Psoas muscle (tissue), 8 donors: ENCODE measurements at regions of chr13 and their contacts with region 1.

Region 1: DNA sequence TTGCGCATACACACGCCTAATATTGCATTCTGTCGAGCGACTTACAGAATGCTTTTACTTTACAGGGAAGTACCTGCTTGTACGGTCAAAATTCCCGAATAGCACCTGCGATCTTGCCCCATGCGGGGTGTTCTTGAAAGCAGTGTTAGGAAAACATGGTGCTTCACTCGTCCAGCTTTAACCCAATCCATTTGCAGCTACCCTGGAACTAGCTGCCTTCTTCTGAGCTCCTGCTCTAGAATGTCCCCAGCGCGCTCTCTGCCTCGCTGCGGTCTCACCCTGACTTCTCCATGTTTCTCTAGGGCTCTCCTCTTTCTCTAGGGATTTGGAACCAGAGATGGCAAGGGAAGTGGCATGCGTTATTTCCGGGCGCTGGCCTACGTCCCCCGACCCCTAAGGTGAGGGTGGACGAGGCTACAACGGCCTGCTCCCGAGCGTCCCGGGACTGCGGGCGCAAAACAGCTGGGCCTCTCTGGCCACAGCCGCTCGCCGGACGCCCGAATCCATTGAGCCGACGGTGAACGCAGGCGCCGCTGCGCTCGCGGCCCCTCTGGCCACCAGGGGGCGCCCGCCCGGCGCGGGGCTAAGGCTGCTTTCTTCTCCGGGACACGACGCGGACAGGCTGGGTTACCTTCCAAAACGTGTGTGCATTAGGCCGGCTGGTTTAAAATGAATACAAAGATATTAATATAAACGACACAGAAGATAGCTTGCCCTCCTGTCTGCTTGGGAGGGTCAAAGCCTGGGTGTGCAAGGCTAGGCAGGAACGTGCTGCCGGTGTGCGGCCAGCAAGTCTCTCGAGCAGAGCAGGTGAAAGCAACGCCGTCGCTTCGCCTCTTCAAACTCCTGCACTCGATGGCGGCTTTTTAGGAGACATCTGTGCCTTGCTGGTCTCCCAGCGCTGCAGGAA is 1.8 kb upstream of the SPRY2 start:
- DNase-seq: peak; percentile 89 to 92
- ATAC-seq: peak; percentile 54 to 68 (median 60)
- H3K4me3 ChIP-seq: peak overlapping the region; percentile 98
- H3K27ac ChIP-seq: peak overlapping the region; percentile 99
- H3K4me1 ChIP-seq: peaks cover 13% of the 10 kb centered on the region
- H3K27me3 ChIP-seq: no peaks in the 10 kb centered on the region
- CTCF ChIP-seq: peak; percentile 100

Region 2: DNA sequence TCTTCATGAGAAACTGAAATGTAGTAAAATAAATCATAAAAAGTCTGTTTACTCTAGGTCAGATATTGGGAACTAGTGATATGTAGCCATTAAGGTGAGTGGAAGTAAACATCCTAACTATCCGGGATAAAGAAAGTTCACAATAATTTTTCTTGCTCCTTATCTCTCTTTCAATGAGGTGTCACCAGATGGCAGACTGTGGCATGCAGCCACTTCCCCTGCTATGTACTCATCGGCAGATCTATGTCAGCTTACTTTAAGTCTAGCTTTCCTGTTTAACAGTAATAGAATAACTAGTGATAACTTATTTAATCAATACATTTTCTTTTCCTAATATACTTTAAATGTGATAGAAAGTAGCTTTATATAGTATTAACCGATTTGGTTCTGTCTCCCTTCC is 679.8 kb before region 1 on chr13:
- intact Hi-C with region 1: loop called in 1 of 2 experiments (anchors 5 kb)
- DNase-seq: peak in 1 of 2 donors; percentile 53
- ATAC-seq: peak in 3 of 4 donors; percentile 27 to 39 (median 38)
- H3K4me3 ChIP-seq: peak overlapping the region; percentile 22
- H3K27ac ChIP-seq: peak overlapping the region; percentile 70
- H3K4me1 ChIP-seq: peaks cover 34% of the 10 kb centered on the region
- H3K27me3 ChIP-seq: no peaks in the 10 kb centered on the region
- CTCF ChIP-seq: no peak

Region 3: DNA sequence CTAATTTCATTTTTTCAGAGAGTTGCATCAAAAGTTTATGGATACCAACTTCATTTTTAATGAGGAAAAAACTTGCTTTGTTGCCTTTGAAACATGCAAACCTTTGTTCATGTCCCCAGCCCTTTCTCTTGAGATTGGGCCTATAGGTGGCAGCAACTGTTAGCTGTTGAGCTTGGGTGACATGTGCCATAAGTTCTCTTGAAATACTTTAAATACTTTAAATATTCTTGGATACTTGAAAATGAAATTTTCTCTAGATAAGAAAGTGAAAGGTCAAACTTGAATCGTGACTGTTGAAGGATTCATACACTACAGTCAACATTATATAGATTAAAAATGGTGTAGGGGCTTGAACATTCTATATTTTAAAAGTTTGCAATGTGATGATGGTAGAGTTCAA is 566.9 kb before region 1 on chr13:
- intact Hi-C with region 1: loop called in 1 of 2 experiments (anchors 5 kb)
- DNase-seq: no peak
- ATAC-seq: peak in 1 of 4 donors; percentile 65
- H3K4me3 ChIP-seq: no peak overlapping the region
- H3K27ac ChIP-seq: no peak overlapping the region
- H3K4me1 ChIP-seq: no peaks in the 10 kb centered on the region
- H3K27me3 ChIP-seq: no peaks in the 10 kb centered on the region
- CTCF ChIP-seq: peak; percentile 55

Region 4: DNA sequence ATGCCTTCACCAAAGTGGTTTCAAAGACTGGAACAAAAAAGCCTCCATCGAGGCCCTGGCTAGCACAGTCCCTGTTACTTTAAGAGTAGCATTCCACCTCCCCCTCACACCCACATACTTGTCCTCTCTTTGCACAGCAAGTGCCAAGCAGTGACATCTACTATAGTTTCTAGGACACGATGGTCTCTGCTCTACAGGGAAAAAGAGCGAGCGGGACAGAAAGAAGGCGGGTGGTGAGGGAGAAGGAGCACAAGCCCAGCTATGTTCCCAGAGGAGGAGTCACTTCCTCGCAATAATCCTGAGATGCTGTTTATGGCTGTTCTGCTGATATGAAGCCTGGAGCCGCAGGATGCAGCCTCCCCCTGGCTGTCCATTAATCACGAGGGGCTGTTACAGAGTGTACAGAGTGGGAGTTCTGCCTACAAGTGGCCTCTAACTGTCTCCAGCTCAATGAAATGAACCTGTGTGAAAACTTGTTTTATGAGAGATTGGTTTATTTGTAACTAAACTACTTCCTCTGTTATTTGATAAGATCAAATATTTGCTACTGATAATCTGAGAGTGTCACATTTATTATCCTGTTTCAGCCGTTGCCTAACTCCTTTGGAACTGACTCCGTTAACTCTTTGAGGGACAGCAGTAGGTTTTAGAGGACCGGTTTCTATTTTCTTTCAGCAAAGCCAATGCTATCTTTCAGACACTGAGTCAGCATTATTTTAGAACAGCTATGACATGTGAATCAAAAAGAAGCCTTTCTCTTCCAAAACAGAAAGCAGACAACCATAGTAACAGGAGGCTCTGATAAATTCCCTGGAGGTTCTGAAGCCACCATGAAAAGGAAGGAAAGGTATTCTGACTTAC is 209.8 kb before region 1 on chr13:
- intact Hi-C with region 1: loop called (anchors 5 kb)
- DNase-seq: peak; percentile 36 to 73
- ATAC-seq: peak; percentile 81 to 96 (median 93)
- H3K4me3 ChIP-seq: peak overlapping the region; percentile 55
- H3K27ac ChIP-seq: peak overlapping the region; percentile 84
- H3K4me1 ChIP-seq: peaks cover 28% of the 10 kb centered on the region
- H3K27me3 ChIP-seq: no peaks in the 10 kb centered on the region
- CTCF ChIP-seq: no peak

Region 5: DNA sequence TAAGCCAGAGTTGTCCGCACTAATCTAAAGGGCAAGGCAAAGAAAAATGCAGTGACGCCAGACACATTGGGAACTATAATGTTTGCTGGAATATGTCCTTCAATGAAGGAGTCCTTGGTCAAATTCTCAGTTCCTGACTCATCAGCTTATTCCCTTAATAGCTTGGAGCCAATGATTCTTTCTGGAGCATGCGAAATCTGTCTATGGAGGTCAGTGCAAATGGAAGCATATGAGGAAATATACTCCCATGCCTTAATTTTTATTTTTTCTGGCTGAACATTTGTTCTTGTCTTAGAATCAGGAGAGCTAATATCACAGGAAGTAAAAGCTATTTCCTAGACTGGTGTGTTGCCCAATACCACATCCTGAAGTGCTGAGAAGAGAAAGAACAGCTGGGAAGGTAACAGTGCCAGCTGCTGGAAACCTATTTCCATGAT is 288.0 kb after region 1 on chr13:
- intact Hi-C with region 1: no loop called
- DNase-seq: no peak
- ATAC-seq: peak; percentile 27 to 80 (median 69)
- H3K4me3 ChIP-seq: no peak overlapping the region
- H3K27ac ChIP-seq: no peak overlapping the region
- H3K4me1 ChIP-seq: no peaks in the 10 kb centered on the region
- H3K27me3 ChIP-seq: no peaks in the 10 kb centered on the region
- CTCF ChIP-seq: no peak

Region 6: GRCh38 chr13:81017513-81018152 is 674.9 kb after region 1 on chr13:
- intact Hi-C with region 1: loop called in 1 of 2 experiments (anchors 5 kb)
- DNase-seq: no peak
- ATAC-seq: peak in 2 of 4 donors; percentile 55 to 75
- H3K4me3 ChIP-seq: peak overlapping the region; percentile 35
- H3K27ac ChIP-seq: no peak overlapping the region
- H3K4me1 ChIP-seq: no peaks in the 10 kb centered on the region
- H3K27me3 ChIP-seq: no peaks in the 10 kb centered on the region
- CTCF ChIP-seq: peak; percentile 60